Activated CD4-positive, alpha-beta memory T cell treated with anti-CD3 and anti-CD28 coated beads for 36 hours (primary cell): ENCODE measurements at regions of chr2 and their contacts with region 1.

Region 1: DNA sequence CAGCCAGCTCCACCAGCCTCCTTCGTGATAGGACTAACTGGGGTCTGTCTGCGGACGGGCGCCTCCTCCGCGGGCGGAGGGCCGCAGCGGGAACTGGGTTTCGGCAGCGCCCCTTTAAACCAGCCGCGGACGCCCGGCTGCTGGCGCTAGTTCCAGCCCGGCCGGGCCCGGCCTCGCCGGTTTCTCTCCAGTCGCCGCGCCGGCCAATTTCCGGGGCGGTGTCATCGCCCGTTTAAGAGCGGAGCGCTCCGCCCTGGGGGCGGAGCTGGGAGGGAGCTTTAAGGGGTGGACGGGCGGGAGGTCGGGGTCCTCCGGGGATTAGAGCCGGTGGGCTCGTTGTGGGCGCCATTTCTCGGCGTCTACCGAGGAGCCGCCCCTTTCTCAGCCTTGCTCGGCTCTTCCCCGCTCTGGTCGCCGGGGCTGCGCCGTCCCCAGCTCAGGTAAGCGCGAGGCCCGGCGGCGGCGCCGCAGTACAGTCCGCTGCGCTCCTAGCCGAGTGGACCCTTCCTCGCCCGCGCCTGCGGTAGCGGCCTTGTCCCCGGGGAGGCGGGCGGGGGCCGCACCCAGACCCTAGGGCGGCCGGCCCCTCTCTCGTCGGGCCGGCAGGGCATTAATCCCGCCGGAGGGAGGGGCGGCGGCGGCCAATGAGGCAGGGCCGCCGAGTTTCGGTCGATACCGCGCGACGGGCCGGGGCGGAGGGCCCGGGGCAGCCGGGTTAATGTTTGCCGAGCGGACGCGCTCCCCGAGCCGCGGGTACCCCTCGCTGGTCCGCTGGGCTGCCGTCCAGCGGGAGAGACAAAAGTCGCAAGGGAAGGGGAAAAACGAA is at the start of gene EPB41L5:
- DNase-seq: peak; percentile 87
- H3K4me3 Mint-ChIP-seq: peak within 1 kb of the TSS; percentile 73
- H3K27ac Mint-ChIP-seq: no peak within 1 kb of the TSS
- H3K4me1 Mint-ChIP-seq: peaks cover 10% of the 10 kb centered on the region
- H3K27me3 Mint-ChIP-seq: peaks cover 1% of the 10 kb centered on the region
- total RNA-seq, gene EPB41L5: 2.5 to 2.7 TPM

Region 2: DNA sequence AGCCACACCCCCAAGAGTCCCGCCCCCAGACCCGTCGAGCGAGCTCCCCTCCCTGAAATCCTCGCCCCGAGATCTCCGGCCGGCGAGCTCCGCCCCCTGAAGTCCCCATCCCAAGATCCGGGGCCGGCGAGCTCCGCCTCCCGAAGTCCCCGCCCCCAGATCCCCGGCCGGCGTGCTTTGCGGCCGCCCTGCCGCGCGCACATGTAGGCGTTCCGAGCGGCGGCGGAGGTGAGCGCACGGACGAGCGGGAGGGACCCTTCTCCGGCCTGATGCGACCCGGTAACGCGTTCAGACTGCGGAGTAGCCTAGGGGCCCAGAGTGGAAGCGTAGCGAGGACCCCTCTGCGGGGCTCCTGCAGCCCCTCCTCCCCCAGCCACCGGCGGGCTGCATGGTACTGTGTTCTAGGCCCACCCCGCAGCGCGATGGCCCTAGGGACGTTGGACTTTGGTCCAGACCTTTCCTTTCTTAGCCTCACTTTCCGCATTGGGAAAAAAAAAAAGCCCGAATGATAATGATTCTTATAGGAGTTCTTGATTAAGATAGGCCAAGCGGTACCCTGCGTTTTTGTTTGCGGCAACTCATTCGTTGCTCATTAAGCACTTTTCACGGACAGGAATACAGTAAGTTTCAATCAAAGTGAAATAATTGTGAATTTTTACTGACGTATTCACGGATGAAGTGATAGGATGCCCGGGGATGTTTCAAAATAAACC is 333.8 kb before region 1 on chr2 and contains the start of gene TMEM177:
- CTCF ChIA-PET with region 1: no interaction called
- POLR2A ChIA-PET with region 1: interaction called, 3 read pairs
- intact Hi-C with region 1: loop called (anchors 1 kb)
- DNase-seq: peak; percentile 93
- H3K4me3 Mint-ChIP-seq: peak within 1 kb of the TSS; percentile 86
- H3K27ac Mint-ChIP-seq: peak within 1 kb of the TSS; percentile 77
- H3K4me1 Mint-ChIP-seq: peaks cover 34% of the 10 kb centered on the region
- H3K27me3 Mint-ChIP-seq: no peaks in the 10 kb centered on the region
- total RNA-seq, gene TMEM177: 13.5 to 14.9 TPM

Region 3: DNA sequence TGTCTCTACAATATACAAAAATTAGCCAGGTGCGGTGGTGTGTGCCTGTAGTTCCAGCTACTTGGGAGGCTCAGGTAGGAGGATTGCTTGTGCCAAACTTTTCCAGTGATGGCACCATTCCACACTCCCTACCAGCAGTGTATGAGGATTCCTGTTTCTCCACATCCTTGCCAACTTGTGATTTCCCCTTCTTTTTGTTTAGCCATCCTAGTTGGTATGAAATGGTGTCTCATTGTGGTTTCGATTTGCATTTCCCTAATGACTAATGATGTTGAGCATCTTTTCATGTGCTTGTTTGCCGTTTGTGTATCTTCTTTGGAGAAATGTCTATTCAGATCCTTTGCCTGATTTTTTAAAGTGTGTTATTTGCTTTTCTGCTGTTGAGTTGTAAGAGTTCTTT is 40.9 kb after region 1 on chr2:
- CTCF ChIA-PET with region 1: no interaction called
- POLR2A ChIA-PET with region 1: no interaction called
- intact Hi-C with region 1: no loop called
- DNase-seq: no peak
- H3K4me3 Mint-ChIP-seq: no peak overlapping the region
- H3K27ac Mint-ChIP-seq: no peak overlapping the region
- H3K4me1 Mint-ChIP-seq: no peaks in the 10 kb centered on the region
- H3K27me3 Mint-ChIP-seq: no peaks in the 10 kb centered on the region

Region 4: GRCh38 chr2:120531863-120532600 is 519.0 kb after region 1 on chr2:
- CTCF ChIA-PET with region 1: no interaction called
- POLR2A ChIA-PET with region 1: no interaction called
- intact Hi-C with region 1: no loop called
- DNase-seq: no peak
- H3K4me3 Mint-ChIP-seq: no peak overlapping the region
- H3K27ac Mint-ChIP-seq: no peak overlapping the region
- H3K4me1 Mint-ChIP-seq: no peaks in the 10 kb centered on the region
- H3K27me3 Mint-ChIP-seq: peaks cover 1% of the 10 kb centered on the region